Body of pancreas (tissue), 4 donors: ENCODE measurements at regions of chr1 and their contacts with region 1.

Region 1: DNA sequence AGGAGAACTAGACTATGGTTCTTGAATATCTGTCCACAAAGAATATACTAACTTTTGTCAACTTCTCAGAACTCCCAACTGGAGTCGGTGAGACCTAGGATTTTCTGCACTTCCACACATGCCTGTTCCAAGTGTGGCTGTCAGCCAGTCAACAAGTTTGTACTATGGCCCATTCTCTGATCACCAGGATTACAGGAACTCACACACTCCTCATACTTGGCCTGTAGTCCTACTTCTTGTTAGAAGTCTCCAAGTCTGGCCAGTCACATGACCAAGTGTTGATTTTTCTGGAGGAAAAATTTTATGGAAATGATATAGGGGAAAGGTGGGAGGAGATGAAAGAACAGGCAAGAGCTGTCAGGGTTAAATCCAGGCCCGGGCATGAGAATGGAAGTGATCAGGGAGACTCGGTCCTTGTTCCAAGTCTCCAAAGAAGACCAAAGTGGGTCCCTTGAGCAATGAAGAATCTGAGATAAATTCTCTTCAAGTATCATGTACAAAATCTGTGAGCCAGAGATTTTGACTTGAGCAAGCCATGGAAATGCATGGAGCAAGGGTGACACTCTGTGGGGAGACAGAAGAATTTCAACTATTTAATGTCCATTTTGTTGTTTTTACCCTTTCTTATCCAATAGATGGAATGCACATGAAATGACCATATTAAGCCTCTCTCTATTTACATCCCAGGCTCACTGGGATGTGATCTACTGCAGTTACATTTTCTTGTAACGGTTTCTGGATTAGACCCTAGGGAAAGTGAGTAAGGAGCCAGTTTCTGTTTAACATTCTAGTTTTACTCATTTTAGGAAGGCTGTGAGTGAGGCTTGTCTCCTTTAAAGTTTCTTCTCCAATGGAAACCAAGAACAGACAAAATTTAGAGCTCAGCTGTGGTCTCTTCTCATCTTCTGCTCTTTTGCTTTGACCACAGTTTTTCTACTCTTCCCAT is 320.9 kb downstream of the ASTN1 start:
- DNase-seq: peak; percentile 7 to 30 (median 14)
- ATAC-seq: peak; percentile 47
- H3K4me3 ChIP-seq: no peak overlapping the region
- H3K27ac ChIP-seq: no peak overlapping the region
- H3K4me1 ChIP-seq: no peaks in the 10 kb centered on the region
- H3K27me3 ChIP-seq: no peaks in the 10 kb centered on the region
- CTCF ChIP-seq: peak; percentile 27 to 87 (median 66)
- POLR2A ChIP-seq: no peak

Region 2: GRCh38 chr1:176559878-176560277 is 283.7 kb before region 1 on chr1:
- intact Hi-C with region 1: loop called (anchors 10 kb)
- DNase-seq: peak; percentile 56 to 68 (median 62)
- ATAC-seq: peak; percentile 83
- H3K4me3 ChIP-seq: no peak overlapping the region
- H3K27ac ChIP-seq: no peak overlapping the region
- H3K4me1 ChIP-seq: peaks cover 17% of the 10 kb centered on the region
- H3K27me3 ChIP-seq: no peaks in the 10 kb centered on the region
- CTCF ChIP-seq: peak; percentile 78 to 94 (median 85)
- POLR2A ChIP-seq: no peak

Region 3: GRCh38 chr1:177010211-177010825 is 166.7 kb after region 1 on chr1:
- intact Hi-C with region 1: no loop called
- DNase-seq: no peak
- ATAC-seq: no peak
- H3K4me3 ChIP-seq: no peak overlapping the region
- H3K27ac ChIP-seq: no peak overlapping the region
- H3K4me1 ChIP-seq: no peaks in the 10 kb centered on the region
- H3K27me3 ChIP-seq: no peaks in the 10 kb centered on the region
- CTCF ChIP-seq: no peak
- POLR2A ChIP-seq: no peak